IMR-90 (cell line): ENCODE measurements at regions of chr4 and their contacts with region 1.

Region 1: GRCh38 chr4:147866532-147867271 is 134.8 kb downstream of the ARHGAP10 start:
- DNase-seq: peak; percentile 91
- ATAC-seq: peak; percentile 85
- H3K4me3 ChIP-seq: no peak overlapping the region
- H3K27ac ChIP-seq: no peak overlapping the region
- H3K4me1 ChIP-seq: peaks cover 14% of the 10 kb centered on the region
- H3K27me3 ChIP-seq: no peaks in the 10 kb centered on the region
- CTCF ChIP-seq: peak; percentile 100; the same call in 1 of the 2 replicates
- POLR2A ChIP-seq: peak; percentile 61; the same call in 1 of the 2 replicates
- RAD21 ChIP-seq: peak; percentile 99

Region 2: DNA sequence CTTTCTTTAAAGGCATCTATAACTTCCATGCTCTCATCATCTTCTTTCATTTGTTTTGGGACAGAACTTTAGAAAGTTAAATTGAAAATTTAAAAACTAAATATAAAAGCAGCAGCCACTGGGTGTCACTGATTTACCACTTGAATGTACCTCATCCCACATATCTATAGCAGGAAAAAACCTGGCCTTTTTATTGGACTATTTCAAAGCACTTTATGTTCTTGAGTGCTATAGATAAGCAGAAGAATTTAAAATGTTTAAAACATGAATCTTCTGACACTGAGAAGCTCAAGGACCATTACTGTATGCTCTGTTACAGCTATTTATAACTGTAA is 755.7 kb before region 1 on chr4:
- CTCF ChIA-PET with region 1: interaction called, 3 read pairs
- POLR2A ChIA-PET with region 1: no interaction called
- dilution Hi-C with region 1: no loop called
- in situ Hi-C with region 1: loop called (anchors 10 kb)
- intact Hi-C with region 1: loop called (anchors 5 kb)
- DNase-seq: peak; percentile 47
- ATAC-seq: peak; percentile 82
- H3K4me3 ChIP-seq: no peak overlapping the region
- H3K27ac ChIP-seq: no peak overlapping the region
- H3K4me1 ChIP-seq: no peaks in the 10 kb centered on the region
- H3K27me3 ChIP-seq: no peaks in the 10 kb centered on the region
- CTCF ChIP-seq: peak; percentile 58
- POLR2A ChIP-seq: no peak
- RAD21 ChIP-seq: peak; percentile 66

Region 3: GRCh38 chr4:147518846-147519767 is 347.6 kb before region 1 on chr4:
- CTCF ChIA-PET with region 1: interaction called, 4 read pairs
- POLR2A ChIA-PET with region 1: no interaction called
- dilution Hi-C with region 1: no loop called
- in situ Hi-C with region 1: loop called (anchors 25 kb)
- intact Hi-C with region 1: loop called (anchors 2 kb)
- DNase-seq: peak; percentile 86
- ATAC-seq: peak; percentile 89
- H3K4me3 ChIP-seq: no peak overlapping the region
- H3K27ac ChIP-seq: no peak overlapping the region
- H3K4me1 ChIP-seq: no peaks in the 10 kb centered on the region; the same call in 1 of the 2 replicates
- H3K27me3 ChIP-seq: no peaks in the 10 kb centered on the region
- CTCF ChIP-seq: peak; percentile 85
- POLR2A ChIP-seq: no peak
- RAD21 ChIP-seq: peak; percentile 88

Region 4: GRCh38 chr4:147638942-147639341 is 227.8 kb before region 1 on chr4:
- CTCF ChIA-PET with region 1: interaction called, 5 read pairs
- POLR2A ChIA-PET with region 1: no interaction called
- dilution Hi-C with region 1: no loop called
- in situ Hi-C with region 1: no loop called
- intact Hi-C with region 1: loop called (anchors 1 kb)
- DNase-seq: peak; percentile 34
- ATAC-seq: peak; percentile 24
- H3K4me3 ChIP-seq: no peak overlapping the region
- H3K27ac ChIP-seq: no peak overlapping the region
- H3K4me1 ChIP-seq: no peaks in the 10 kb centered on the region
- H3K27me3 ChIP-seq: no peaks in the 10 kb centered on the region
- CTCF ChIP-seq: no peak
- POLR2A ChIP-seq: no peak
- RAD21 ChIP-seq: no peak

Region 5: DNA sequence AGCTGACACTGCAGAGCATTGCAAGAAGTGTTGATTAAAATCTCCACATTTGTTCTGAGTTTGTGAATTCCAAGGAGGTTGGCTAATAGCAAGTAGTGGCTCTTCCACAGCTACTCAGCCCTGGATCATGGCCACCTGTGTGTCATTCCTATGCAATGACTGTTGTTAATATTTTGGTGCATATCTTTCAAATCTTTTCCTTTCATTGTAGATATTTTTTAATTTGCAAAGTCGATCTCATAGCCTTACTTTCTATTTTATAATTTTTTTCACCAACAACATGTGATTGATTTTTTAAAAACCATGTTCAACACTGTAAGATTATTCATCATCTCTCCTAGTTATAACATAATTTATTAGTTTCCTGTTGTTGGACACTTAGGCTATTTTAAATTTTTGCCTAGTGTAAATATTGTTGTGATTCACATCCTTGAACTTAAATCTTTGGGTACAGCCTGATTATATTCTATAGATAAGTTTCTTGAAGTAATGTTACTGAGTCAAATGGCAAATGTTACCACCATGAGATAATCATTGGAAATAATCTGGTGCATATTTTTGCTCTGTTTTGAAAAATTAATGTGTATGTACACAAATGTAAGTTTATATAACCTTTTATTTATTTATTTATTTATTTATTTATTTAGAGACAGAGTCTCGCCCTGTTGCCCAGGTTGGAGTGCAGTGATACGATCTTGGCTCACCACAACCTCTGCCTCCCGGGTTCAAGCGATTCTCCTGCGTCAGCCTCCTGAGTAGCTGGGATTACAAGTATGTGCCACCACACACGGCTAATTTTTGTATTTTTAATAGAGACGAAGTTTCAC is 151.9 kb before region 1 on chr4:
- CTCF ChIA-PET with region 1: interaction called, 14 read pairs
- POLR2A ChIA-PET with region 1: no interaction called
- dilution Hi-C with region 1: no loop called
- in situ Hi-C with region 1: loop called (anchors 5 kb)
- intact Hi-C with region 1: no loop called
- DNase-seq: peak; percentile 90
- ATAC-seq: peak; percentile 88
- H3K4me3 ChIP-seq: no peak overlapping the region
- H3K27ac ChIP-seq: peak overlapping the region; percentile 79
- H3K4me1 ChIP-seq: peaks cover 4% of the 10 kb centered on the region; the same call in 1 of the 2 replicates
- H3K27me3 ChIP-seq: no peaks in the 10 kb centered on the region
- CTCF ChIP-seq: no peak
- POLR2A ChIP-seq: no peak
- RAD21 ChIP-seq: no peak

Region 6: DNA sequence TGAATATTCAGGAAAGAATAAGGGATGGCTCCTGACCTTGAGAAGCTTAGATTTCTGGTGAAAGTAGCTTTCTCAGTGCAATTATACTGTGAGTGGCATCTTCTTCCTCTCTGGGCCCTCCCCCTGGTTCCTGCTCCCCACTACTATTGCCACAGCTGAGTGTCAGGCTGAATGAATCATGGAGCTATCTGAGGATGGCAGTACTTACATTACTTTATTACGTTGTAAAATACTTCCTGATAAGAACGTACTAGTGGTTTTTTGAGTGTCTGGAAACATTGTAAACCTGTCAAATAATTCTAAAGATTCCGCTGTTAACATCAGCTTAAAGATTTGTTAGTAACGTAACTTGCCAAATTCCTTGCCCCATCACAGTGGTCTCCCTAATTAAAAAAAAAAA is 98.6 kb before region 1 on chr4:
- CTCF ChIA-PET with region 1: interaction called, 15 read pairs
- POLR2A ChIA-PET with region 1: no interaction called
- dilution Hi-C with region 1: no loop called
- in situ Hi-C with region 1: no loop called
- intact Hi-C with region 1: no loop called
- DNase-seq: peak; percentile 87
- ATAC-seq: peak; percentile 72
- H3K4me3 ChIP-seq: no peak overlapping the region
- H3K27ac ChIP-seq: peak overlapping the region; percentile 10; the same call in 1 of the 2 replicates
- H3K4me1 ChIP-seq: peaks cover 16% of the 10 kb centered on the region
- H3K27me3 ChIP-seq: no peaks in the 10 kb centered on the region
- CTCF ChIP-seq: no peak
- POLR2A ChIP-seq: no peak
- RAD21 ChIP-seq: 0 out of 2 replicates have a peak, but pooled peaks have one; percentile 14